IMR-90 (cell line): ENCODE measurements at regions of chr4 and their contacts with region 1.

Region 1: DNA sequence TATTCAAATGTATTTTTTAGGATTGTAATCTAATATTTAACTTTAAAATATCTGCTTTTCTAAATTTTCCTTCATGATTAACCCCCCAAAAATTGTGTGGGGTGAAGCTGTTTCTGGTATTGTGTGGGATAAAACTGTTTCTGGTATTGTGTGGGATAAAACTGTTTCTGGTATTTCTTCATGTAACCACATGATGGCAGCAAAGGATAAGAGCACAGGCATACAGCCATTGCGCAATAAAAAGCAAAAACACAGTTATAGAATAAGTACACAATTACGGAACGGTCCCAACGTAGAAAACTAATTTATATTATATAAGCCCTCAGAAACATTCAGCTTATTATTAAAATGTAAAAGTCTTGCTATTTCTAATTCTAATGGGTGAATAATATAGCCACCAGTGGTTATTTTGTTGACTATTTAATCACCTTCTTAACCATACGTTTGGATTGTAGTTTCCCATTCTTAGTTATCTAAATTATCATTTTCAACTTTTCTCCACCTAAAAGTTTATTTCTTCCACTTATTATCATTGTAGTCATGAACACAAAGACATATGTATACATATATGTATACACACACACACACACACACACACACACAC is 333.9 kb upstream of the FSTL5 start:
- DNase-seq: peak; percentile 42
- ATAC-seq: peak; percentile 68; the same call in 1 of the 2 replicates
- H3K4me3 ChIP-seq: no peak overlapping the region
- H3K27ac ChIP-seq: no peak overlapping the region
- H3K4me1 ChIP-seq: no peaks in the 10 kb centered on the region
- H3K27me3 ChIP-seq: no peaks in the 10 kb centered on the region
- CTCF ChIP-seq: peak; percentile 85
- POLR2A ChIP-seq: no peak
- RAD21 ChIP-seq: peak; percentile 94

Region 2: DNA sequence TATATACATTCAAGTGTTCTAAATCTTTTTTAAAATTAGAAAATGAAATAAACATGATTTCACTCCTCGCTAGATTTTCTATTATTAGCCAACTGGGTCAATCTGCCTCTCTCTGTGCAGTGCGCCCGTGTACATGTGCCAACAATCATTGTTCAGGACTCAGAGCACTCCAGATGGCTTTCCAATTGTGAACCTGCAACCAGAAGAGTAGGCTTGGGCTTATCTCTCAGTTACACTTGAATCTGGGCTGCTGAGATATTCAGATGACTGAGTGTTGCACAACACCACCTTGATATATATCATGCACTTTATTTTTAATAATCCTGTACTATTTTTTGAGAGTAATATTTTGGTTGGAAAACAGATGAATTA is 149.8 kb before region 1 on chr4:
- CTCF ChIA-PET with region 1: no interaction called
- POLR2A ChIA-PET with region 1: no interaction called
- dilution Hi-C with region 1: no loop called
- in situ Hi-C with region 1: no loop called
- intact Hi-C with region 1: no loop called
- DNase-seq: no peak
- ATAC-seq: no peak
- H3K4me3 ChIP-seq: no peak overlapping the region
- H3K27ac ChIP-seq: no peak overlapping the region
- H3K4me1 ChIP-seq: no peaks in the 10 kb centered on the region
- H3K27me3 ChIP-seq: no peaks in the 10 kb centered on the region
- CTCF ChIP-seq: no peak
- POLR2A ChIP-seq: no peak
- RAD21 ChIP-seq: no peak

Region 3: GRCh38 chr4:163042306-163042705 is 544.6 kb after region 1 on chr4:
- CTCF ChIA-PET with region 1: no interaction called
- POLR2A ChIA-PET with region 1: no interaction called
- dilution Hi-C with region 1: no loop called
- in situ Hi-C with region 1: no loop called
- intact Hi-C with region 1: loop called (anchors 5 kb)
- DNase-seq: no peak
- ATAC-seq: no peak
- H3K4me3 ChIP-seq: no peak overlapping the region
- H3K27ac ChIP-seq: no peak overlapping the region
- H3K4me1 ChIP-seq: no peaks in the 10 kb centered on the region
- H3K27me3 ChIP-seq: no peaks in the 10 kb centered on the region
- CTCF ChIP-seq: no peak
- POLR2A ChIP-seq: no peak
- RAD21 ChIP-seq: no peak

Region 4: DNA sequence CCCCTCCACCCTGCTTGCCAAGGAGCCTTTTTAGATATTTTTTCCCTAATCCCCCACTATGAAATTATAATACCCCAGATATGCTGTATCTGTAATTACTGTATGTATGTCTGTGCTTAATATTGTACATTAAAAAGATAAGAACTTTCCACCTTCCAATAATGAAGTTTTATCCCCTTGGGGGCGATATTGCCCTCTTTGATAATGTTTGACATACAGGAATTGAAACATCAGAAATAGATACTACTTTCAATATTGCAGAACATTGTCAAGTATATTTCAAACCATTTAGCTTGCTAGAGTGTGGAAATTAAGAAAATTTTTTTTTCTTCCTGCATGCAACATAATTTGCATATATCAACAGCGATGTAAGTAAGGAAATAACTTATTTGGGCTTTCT is 610.1 kb after region 1 on chr4:
- CTCF ChIA-PET with region 1: no interaction called
- POLR2A ChIA-PET with region 1: no interaction called
- dilution Hi-C with region 1: no loop called
- in situ Hi-C with region 1: no loop called
- intact Hi-C with region 1: loop called (anchors 10 kb)
- DNase-seq: peak; percentile 46
- ATAC-seq: peak; percentile 46; the same call in 1 of the 2 replicates
- H3K4me3 ChIP-seq: no peak overlapping the region
- H3K27ac ChIP-seq: no peak overlapping the region
- H3K4me1 ChIP-seq: no peaks in the 10 kb centered on the region
- H3K27me3 ChIP-seq: no peaks in the 10 kb centered on the region
- CTCF ChIP-seq: peak; percentile 54
- POLR2A ChIP-seq: no peak
- RAD21 ChIP-seq: peak; percentile 58

Region 5: GRCh38 chr4:163191999-163192398 is 694.3 kb after region 1 on chr4:
- CTCF ChIA-PET with region 1: interaction called, 3 read pairs
- POLR2A ChIA-PET with region 1: no interaction called
- dilution Hi-C with region 1: no loop called
- in situ Hi-C with region 1: no loop called
- intact Hi-C with region 1: loop called (anchors 1 kb)
- DNase-seq: peak; percentile 39
- ATAC-seq: peak; percentile 76
- H3K4me3 ChIP-seq: no peak overlapping the region
- H3K27ac ChIP-seq: no peak overlapping the region
- H3K4me1 ChIP-seq: no peaks in the 10 kb centered on the region
- H3K27me3 ChIP-seq: no peaks in the 10 kb centered on the region
- CTCF ChIP-seq: peak; percentile 72
- POLR2A ChIP-seq: no peak
- RAD21 ChIP-seq: peak; percentile 74

Region 6: GRCh38 chr4:163332500-163333406 is 835.1 kb after region 1 on chr4 and contains the start of gene NPY1R:
- CTCF ChIA-PET with region 1: interaction called, 4 read pairs
- POLR2A ChIA-PET with region 1: no interaction called
- dilution Hi-C with region 1: no loop called
- in situ Hi-C with region 1: loop called (anchors 10 kb)
- intact Hi-C with region 1: loop called (anchors 1 kb)
- DNase-seq: peak; percentile 73
- ATAC-seq: peak; percentile 98
- H3K4me3 ChIP-seq: peak within 1 kb of the TSS; percentile 46
- H3K27ac ChIP-seq: no peak within 1 kb of the TSS
- H3K4me1 ChIP-seq: no peaks in the 10 kb centered on the region
- H3K27me3 ChIP-seq: peaks cover 19% of the 10 kb centered on the region
- CTCF ChIP-seq: peak; percentile 69
- POLR2A ChIP-seq: no peak
- RAD21 ChIP-seq: peak; percentile 71
- total RNA-seq, gene NPY1R: under 0.01 TPM in 2 replicates

Region 7: GRCh38 chr4:163484906-163485305 is 987.2 kb after region 1 on chr4:
- CTCF ChIA-PET with region 1: no interaction called
- POLR2A ChIA-PET with region 1: no interaction called
- dilution Hi-C with region 1: no loop called
- in situ Hi-C with region 1: no loop called
- intact Hi-C with region 1: loop called (anchors 5 kb)
- DNase-seq: peak; percentile 51
- ATAC-seq: peak; percentile 72
- H3K4me3 ChIP-seq: no peak overlapping the region
- H3K27ac ChIP-seq: no peak overlapping the region
- H3K4me1 ChIP-seq: no peaks in the 10 kb centered on the region
- H3K27me3 ChIP-seq: peaks cover 7% of the 10 kb centered on the region
- CTCF ChIP-seq: peak; percentile 65
- POLR2A ChIP-seq: no peak
- RAD21 ChIP-seq: peak; percentile 67